Uterus (tissue), 4 donors: ENCODE measurements at regions of chr11 and their contacts with region 1.

Region 1: DNA sequence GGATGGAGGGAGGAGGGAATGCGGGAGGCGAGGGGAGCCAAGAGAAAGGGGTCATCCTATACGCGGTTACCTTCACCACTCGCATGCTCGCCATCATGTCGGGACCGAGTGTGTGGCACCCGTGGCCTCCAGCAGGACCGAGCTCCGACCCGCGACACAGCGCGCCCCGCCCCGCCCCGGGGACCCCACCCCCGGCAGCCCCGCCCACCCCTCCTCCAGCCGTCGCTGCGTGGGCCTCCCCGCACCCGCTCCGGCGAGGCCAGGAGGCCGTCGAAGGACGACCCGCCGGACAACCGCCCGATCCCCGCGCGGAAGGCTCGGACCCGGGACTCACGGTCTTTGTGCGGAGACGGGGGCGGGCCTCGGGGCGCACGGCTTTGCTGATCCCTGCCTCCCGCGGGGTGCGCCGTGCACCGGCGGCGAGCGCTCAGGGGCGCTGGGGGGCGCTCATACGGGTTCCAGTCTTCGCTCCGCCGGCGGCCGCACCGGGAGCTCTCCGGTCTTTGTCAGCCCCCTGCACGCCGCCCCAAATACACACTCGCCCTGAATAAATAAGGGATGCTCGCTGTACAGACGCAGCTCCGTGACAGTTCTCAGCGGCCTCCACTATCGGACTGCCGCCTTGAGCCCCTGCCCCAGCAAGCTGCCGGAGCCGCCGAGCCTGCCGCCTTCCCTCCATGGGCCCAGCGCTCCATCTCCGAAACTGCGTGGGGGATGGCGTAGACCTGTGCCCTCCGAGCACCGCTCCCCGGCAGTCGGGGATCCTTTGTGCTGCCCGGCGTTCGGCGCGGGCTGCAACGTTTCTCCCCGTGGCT is at the start of gene UBE2L6:
- DNase-seq: peak; percentile 47 to 67
- H3K4me3 ChIP-seq: peak within 1 kb of the TSS; percentile 60 to 62
- H3K27ac ChIP-seq: peak within 1 kb of the TSS; percentile 86 to 88
- H3K4me1 ChIP-seq: no peaks in the 10 kb centered on the region
- H3K27me3 ChIP-seq: no peaks in the 10 kb centered on the region
- CTCF ChIP-seq: peak in 2 of 4 experiments; percentile 80 to 98
- POLR2A ChIP-seq: peak in 1 of 2 donors; percentile 25
- total RNA-seq, gene UBE2L6: 28.3 to 87.9 (median 84.2) TPM

Region 2: GRCh38 chr11:57604296-57605027 is 36.7 kb after region 1 on chr11:
- intact Hi-C with region 1: loop called (anchors 5 kb)
- DNase-seq: no peak
- H3K4me3 ChIP-seq: no peak overlapping the region
- H3K27ac ChIP-seq: no peak overlapping the region
- H3K4me1 ChIP-seq: no peaks in the 10 kb centered on the region
- H3K27me3 ChIP-seq: no peaks in the 10 kb centered on the region
- CTCF ChIP-seq: no peak
- POLR2A ChIP-seq: no peak

Region 3: DNA sequence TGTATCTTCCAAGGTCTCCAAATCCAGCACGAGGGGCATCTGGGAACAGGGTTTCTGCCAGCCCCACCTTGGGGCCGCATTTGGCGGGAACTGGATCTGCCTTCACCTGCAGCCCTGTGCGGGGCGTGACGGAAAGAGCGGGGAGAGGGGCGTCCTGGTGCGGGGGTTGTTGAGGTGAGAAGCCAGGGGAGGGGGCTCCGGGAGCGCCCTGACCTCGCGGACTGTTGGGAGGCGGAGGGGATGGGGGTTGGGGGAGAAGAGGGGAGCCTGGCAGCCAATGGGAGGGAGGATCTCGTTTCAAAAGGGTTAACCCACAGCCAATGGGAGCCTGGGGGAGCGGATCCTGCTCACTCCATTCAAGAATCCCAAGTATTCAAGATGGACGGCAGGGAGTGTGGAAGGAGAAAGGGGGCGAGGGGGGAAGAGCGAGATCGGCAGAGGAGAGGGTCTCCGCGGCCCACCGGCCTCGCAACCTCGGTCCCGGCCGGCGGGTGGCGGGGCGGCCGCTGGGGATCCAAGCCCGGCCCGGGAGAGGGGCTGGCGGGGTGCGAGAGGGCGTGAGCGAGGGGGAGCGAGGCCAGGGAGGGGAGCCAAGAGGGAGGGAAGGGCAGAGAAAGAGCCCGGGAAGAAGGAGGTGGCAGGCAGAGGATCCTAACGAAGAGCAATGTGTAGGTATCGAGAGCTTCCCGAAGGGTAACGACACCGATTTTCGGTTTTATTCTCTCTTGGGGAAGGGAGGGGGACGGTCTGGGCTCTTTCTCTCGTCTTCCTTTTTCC is 70.5 kb after region 1 on chr11:
- intact Hi-C with region 1: loop called (anchors 5 kb)
- DNase-seq: peak; percentile 82 to 90
- H3K4me3 ChIP-seq: peak overlapping the region; percentile 66 to 76
- H3K27ac ChIP-seq: peak overlapping the region; percentile 93 to 95
- H3K4me1 ChIP-seq: peaks cover 0 to 14% of the 10 kb centered on the region in 2 donors
- H3K27me3 ChIP-seq: no peaks in the 10 kb centered on the region
- CTCF ChIP-seq: no peak
- POLR2A ChIP-seq: peak; percentile 30 to 54